ENCODE measurements at regions of chr5 and their contacts with region 1.

Region 1: DNA sequence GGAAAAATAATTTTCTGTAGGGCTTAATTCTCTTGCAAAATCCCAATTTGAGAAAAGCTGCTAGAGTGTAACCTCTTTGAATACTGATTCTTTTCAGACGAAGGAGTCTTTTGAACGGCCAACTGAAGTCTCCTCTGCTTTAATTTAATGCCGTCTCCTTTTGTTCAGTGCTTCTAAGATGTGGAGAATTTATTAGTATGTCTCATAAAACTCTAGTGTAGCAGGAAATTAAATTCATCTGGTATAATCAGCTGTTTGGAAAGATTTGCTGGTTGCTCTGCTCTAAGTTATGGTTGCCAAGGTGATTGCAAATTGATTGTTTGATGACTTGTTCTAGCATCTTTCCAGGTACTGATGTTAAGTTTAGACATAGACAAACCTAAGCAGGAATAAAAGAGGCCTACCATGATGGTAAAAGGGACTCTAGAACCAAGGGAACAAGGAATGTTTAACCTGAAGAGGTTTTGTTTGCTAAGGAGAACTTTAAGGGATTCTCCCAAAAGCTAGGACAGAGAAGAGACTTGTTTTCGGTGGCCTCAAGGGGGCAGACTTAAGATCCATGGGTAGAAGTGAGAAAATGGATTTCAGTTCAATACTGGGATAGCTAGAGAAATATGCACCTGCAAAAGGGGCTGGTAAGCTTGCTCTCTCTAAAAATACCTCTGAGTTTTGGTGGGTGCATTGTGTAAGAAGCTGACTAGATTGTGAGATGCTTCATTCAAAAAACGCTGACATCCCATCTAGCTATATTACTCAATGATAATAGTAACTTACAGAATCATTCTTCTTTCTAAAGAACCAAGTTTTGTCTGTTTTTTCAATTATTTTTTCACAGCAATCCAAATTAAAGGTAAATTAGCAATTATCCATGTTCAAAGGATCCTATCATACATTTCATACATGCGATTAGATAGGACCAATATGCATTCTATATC is 5.7 kb upstream of the ADRB2 start:
- DNase-seq: no peak
- H3K4me3 ChIP-seq: no peak overlapping the region
- H3K27ac ChIP-seq: no peak overlapping the region
- H3K4me1 ChIP-seq: no peaks in the 10 kb centered on the region
- H3K27me3 ChIP-seq: no peaks in the 10 kb centered on the region
- CTCF ChIP-seq: peak; percentile 43

Region 2: DNA sequence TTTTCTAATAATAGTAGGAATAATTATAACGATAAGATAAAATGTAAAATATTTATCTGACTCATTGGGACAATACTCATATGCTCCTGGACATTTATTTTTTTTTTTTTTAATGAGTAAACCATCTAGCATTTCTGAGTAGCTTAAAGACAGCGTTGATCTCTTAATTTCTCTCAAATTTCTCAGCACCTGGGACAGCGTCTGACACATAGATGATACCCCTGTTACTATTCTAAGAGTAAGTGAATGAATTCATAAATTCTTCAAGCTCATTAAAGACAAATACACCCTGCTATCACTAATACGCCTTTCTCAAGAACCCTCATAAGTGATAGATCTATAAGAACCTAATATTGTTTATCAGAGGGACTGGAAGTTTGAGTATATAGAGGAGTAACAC is 154.4 kb before region 1 on chr5:
- intact Hi-C with region 1: no loop called
- DNase-seq: no peak
- H3K4me3 ChIP-seq: no peak overlapping the region
- H3K27ac ChIP-seq: no peak overlapping the region
- H3K4me1 ChIP-seq: no peaks in the 10 kb centered on the region
- H3K27me3 ChIP-seq: no peaks in the 10 kb centered on the region
- CTCF ChIP-seq: no peak

Region 3: GRCh38 chr5:148957591-148958202 is 137.0 kb after region 1 on chr5:
- intact Hi-C with region 1: loop called (anchors 5 kb)
- DNase-seq: peak; percentile 39
- H3K4me3 ChIP-seq: no peak overlapping the region
- H3K27ac ChIP-seq: no peak overlapping the region
- H3K4me1 ChIP-seq: no peaks in the 10 kb centered on the region
- H3K27me3 ChIP-seq: no peaks in the 10 kb centered on the region
- CTCF ChIP-seq: peak; percentile 76